ENCODE measurements at regions of chr9 and their contacts with region 1.

Region 1: DNA sequence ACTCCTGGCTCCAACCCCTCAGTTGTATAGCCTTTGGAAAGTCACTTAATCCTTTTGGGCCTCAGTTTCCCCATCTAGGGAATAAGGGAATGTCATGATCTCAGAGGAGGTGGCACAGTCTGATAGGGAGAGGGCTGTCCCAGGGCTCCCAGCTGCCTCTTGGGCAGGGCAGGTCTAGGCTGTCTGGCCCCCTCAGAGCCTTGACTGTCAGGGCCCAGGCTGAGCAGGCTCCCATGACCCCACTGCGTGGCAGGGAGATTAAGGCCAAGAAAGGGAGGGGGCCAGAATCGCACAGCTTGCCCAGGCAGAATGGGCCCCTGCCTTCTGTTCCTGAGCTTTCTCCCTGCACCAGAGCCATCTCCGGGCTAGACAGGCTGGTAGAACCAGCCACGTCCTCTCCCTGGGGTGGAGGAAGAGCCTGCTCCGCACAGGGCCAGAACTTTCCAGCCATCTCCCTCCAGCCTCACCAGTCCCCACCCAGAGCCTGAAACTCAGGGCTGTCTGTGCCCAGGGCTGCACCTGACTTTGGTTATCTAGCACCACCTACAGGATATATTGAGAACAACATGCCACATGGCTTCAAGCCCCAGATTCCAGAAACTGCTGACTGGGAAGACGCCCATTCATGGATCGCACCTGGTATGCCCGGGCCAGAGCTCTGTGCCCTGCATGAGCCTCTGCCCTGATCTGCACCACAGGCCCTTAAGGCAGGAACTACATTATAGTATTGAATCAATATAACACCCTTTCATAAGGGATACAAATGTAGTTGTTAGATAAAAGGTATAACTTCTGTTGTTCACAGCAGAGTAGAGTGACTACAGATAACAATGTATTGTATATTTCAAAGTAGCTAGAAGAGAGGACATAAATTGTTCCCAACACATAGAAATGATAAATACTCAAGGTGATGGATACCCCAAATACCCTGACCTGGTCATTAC is 32.0 kb downstream of the NAIF1 start:
- DNase-seq: peak; percentile 77
- ATAC-seq: peak; percentile 59
- H3K4me3 Mint-ChIP-seq: no peak overlapping the region
- H3K27ac Mint-ChIP-seq: peak overlapping the region; percentile 59
- H3K4me1 Mint-ChIP-seq: peaks cover 40% of the 10 kb centered on the region
- H3K27me3 Mint-ChIP-seq: peaks cover 2% of the 10 kb centered on the region

Region 2: DNA sequence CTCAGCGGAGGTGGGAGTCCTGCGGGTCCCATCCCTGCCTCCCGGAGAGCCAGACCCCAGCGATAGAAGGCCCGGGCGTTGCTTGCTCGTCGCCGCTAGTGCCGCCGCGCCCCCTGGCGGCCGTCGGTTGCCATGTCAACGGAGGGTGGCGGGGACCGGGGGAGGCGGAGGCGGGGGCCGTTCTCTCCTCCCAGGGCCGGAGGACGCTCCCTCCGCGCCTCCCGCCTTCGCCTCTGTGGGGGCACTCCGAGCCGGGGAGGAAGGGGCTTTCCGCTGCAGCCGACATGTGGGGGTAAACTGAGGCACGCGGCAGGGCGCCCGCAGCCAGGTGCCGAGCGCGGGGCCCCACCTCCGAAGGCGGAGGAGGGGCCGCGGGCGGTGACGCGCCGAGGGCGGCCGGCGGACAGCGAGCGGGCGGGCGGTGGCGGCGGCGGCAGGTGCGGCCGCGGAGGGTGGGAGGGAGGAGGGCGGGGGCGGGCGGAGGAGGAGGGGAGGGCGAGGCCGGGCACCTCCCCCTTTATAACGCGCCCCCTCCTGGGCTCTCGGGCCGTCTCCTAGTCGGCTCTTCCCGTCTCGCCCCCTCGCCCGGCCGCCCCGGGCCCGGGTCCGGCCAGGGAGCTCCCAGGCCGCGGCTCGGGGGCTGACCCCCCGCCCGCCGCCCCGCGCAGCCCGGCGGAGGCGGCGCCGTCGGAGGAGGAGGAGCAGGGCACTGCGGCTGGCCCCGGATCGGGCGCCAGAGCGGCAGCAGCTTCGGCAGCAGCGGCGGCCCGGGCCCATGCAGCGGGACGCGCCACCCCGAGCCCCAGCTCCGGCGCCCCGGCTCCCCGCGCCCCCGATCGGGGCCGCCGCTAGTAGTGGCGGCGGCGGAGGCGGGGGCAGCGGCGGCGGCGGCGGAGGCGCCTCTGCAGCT is 249.8 kb before region 1 on chr9:
- CTCF ChIA-PET with region 1: interaction called, 3 read pairs
- POLR2A ChIA-PET with region 1: no interaction called
- intact Hi-C with region 1: loop called in 1 of 2 experiments (anchors 2 kb)
- DNase-seq: peak; percentile 93
- ATAC-seq: peak; percentile 34
- H3K4me3 Mint-ChIP-seq: peak overlapping the region; percentile 97
- H3K27ac Mint-ChIP-seq: peak overlapping the region; percentile 97
- H3K4me1 Mint-ChIP-seq: peaks cover 74% of the 10 kb centered on the region
- H3K27me3 Mint-ChIP-seq: no peaks in the 10 kb centered on the region

Region 3: GRCh38 chr9:127943731-127944144 is 91.4 kb before region 1 on chr9:
- CTCF ChIA-PET with region 1: interaction called, 126 read pairs
- POLR2A ChIA-PET with region 1: interaction called, 4 read pairs
- intact Hi-C with region 1: loop called (anchors 1 kb)
- DNase-seq: peak; percentile 91
- ATAC-seq: peak; percentile 87
- H3K4me3 Mint-ChIP-seq: no peak overlapping the region
- H3K27ac Mint-ChIP-seq: peak overlapping the region; percentile 81
- H3K4me1 Mint-ChIP-seq: peaks cover 23% of the 10 kb centered on the region
- H3K27me3 Mint-ChIP-seq: no peaks in the 10 kb centered on the region

Region 4: DNA sequence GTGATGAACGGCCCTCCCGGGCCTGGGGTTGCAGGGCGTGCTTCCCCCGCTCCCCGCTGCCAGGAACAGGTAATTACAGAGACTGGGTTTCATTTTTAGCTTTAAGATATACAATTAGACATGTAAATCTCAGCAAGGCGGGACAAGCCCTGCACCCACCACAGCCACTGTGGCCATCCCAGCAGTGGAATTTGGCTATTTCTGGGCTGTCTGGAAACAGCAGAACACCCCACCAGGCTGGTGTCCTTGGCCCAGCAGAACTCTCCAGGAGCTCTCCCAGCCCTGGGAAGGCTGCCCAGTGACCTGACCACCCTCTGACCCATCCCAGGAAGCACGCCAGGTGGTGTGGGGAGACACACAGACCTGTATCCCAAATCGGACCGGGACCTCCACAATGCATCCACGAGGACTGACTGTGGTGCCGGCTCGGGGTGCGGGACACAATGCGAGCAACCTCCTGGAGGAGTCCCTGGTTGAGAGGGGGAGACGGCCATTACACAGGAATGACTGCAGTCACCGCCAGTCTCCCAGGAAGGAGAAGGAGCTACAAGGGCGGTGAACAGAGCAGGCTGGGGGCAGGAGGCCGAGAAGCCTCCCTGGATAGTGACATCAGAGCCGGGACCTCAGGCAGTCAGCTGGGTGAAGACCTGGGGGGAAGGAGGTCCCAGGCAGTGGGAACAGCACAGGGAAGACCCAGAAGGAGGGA is 71.6 kb before region 1 on chr9:
- CTCF ChIA-PET with region 1: interaction called, 72 read pairs
- POLR2A ChIA-PET with region 1: interaction called, 3 read pairs
- intact Hi-C with region 1: no loop called
- DNase-seq: peak; percentile 62
- ATAC-seq: peak; percentile 21
- H3K4me3 Mint-ChIP-seq: peak overlapping the region; percentile 70
- H3K27ac Mint-ChIP-seq: peak overlapping the region; percentile 98
- H3K4me1 Mint-ChIP-seq: peaks cover 99% of the 10 kb centered on the region
- H3K27me3 Mint-ChIP-seq: no peaks in the 10 kb centered on the region

Region 5: DNA sequence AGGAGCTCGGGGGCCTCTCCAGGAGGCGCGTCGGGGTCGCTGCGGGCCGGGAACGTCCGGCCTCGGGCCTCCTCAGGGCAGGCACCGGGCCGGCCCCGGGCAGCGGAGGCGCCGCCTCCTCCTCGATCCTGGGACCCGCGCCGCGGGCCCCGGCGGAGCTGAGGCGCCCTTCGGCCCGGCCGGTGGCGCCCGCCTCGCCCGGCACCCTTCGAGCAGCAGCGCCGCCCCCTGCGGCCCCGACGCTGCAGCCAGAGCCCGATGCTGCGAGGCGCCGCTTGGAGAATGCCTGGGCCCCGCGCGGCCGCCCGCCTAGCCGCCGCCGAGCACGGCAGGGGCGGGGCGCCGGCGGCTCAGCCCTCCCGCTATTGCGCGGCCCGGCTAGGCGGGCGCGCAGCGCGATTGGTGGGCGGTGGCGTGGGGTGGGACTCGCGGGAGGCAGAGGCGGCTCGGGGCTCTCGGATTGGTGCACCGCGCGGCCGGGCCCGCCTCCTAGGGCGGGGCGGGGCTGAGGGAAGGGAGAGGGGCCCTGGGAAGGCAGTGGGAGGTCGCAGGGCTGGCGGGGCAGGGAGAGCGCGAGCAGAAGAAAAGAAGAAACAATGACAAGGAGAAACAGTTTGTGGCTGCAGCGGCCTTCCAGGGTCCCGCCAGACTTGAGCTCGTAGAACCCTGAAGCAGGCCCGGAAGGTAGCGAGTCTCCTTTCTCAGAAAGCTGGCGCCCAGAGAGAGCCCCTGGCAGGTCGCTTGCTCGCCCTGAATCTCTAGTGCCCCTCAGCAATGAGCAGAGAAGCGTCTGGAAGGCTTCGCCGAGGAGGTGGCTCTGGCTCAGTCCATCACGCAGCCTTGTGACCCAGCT is 54.2 kb before region 1 on chr9 and contains the start of gene EEIG1:
- CTCF ChIA-PET with region 1: interaction called, 55 read pairs
- POLR2A ChIA-PET with region 1: interaction called, 12 read pairs
- intact Hi-C with region 1: loop called in 1 of 2 experiments (anchors 1 kb)
- DNase-seq: peak; percentile 99
- ATAC-seq: peak; percentile 87
- H3K4me3 Mint-ChIP-seq: peak within 1 kb of the TSS; percentile 97
- H3K27ac Mint-ChIP-seq: peak within 1 kb of the TSS; percentile 98
- H3K4me1 Mint-ChIP-seq: peaks cover 47% of the 10 kb centered on the region
- H3K27me3 Mint-ChIP-seq: no peaks in the 10 kb centered on the region
- total RNA-seq, gene EEIG1: 56.2 to 58.4 TPM

Region 6: GRCh38 chr9:128048663-128049062 is 13.6 kb after region 1 on chr9:
- CTCF ChIA-PET with region 1: interaction called, 13 read pairs
- POLR2A ChIA-PET with region 1: no interaction called
- intact Hi-C with region 1: no loop called
- DNase-seq: no peak
- ATAC-seq: peak; percentile 93
- H3K4me3 Mint-ChIP-seq: no peak overlapping the region
- H3K27ac Mint-ChIP-seq: peak overlapping the region; percentile 51
- H3K4me1 Mint-ChIP-seq: peaks cover 2% of the 10 kb centered on the region
- H3K27me3 Mint-ChIP-seq: no peaks in the 10 kb centered on the region

Region 7: DNA sequence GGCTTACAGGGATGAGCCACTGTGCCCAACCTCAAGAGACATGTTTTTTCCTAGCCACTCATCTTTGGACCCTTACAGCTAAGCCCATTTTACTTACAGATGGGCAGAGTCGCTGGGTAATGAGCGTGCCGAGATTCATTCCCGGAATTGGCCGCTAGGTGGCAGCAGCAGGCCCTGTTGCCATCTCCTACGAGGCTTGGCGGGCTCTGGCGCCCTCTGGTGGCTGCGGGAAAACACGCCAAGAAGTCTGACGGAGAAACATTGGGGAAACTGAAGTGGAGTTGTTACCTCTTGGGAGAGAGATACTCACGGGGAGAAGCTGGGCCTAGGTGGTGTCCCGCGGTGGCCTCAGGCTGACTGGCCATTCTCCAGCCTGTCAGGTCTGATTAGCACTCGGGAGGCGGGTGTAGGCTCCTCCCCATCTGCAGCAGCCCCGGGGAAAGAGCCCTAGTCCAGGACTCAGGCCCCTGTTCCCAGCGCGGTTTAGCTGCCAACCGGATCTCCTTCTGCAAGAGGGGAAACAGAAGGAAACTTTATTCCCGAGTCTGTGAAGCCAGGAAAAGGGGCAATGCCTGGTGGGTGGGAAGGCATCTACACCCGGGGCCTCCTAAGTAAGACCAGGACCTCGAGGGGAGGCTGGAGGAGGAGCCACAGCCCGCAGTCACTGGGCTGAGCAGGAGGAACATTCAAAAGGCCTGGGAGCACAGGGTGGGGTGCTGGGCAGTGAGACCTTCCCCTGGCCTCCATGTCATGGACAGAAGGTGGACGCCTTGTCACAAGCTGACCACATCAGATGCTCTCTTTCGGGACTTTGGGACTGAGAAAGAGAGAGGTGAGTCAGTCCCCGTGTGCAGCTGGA is 82.7 kb after region 1 on chr9:
- CTCF ChIA-PET with region 1: interaction called, 8 read pairs
- POLR2A ChIA-PET with region 1: no interaction called
- intact Hi-C with region 1: loop called (anchors 2 to 5 kb)
- DNase-seq: peak; percentile 99
- ATAC-seq: peak; percentile 94
- H3K4me3 Mint-ChIP-seq: no peak overlapping the region
- H3K27ac Mint-ChIP-seq: no peak overlapping the region
- H3K4me1 Mint-ChIP-seq: peaks cover 5% of the 10 kb centered on the region
- H3K27me3 Mint-ChIP-seq: no peaks in the 10 kb centered on the region

Region 8: DNA sequence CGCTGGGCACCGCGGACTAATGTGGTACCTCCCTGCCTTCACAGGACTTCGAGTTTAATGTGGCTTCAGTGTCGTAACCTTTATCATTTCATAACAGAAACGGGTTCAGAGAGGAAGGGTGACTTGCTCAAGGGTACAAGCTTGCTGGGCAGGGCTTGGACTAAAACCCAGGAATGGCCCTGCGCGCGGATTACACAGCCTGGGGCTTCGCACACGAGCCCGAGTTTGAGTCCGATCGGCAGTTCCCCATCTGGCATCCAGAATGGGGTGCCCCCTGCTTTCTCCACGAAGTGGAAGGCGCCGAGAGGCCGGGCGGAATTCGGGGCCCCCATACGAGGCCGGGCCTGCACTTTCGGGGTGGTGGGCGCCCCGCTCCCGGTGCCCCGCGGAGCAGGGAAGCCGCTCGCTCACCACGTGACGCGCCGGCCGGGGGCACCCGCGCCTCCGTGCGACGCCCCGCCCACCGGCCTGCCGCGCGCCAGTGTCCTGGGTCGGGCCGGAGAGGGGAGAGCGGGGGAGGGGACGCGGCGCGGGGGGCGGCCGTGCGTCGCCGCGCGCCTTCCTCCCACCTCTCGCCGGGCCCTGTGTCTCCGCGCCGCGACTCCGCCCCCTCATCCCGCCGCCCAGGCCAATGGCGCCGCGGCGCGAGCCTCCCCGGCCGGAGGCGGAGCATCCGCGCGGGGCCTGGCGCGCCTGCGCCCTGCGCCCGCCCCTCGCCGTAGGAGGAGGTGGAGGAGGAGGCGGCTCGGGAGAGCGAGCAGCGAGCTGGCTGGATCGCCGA is 653.6 kb after region 1 on chr9 and contains the start of gene SET:
- CTCF ChIA-PET with region 1: no interaction called
- POLR2A ChIA-PET with region 1: no interaction called
- intact Hi-C with region 1: no loop called
- DNase-seq: peak; percentile 96
- ATAC-seq: peak; percentile 71
- H3K4me3 Mint-ChIP-seq: peak within 1 kb of the TSS; percentile 99
- H3K27ac Mint-ChIP-seq: peak within 1 kb of the TSS; percentile 94
- H3K4me1 Mint-ChIP-seq: peaks cover 61% of the 10 kb centered on the region
- H3K27me3 Mint-ChIP-seq: no peaks in the 10 kb centered on the region
- total RNA-seq, gene SET: 673 to 682 TPM